GM18951 (cell line): ENCODE measurements at regions of chr20 and their contacts with region 1.

Region 1: DNA sequence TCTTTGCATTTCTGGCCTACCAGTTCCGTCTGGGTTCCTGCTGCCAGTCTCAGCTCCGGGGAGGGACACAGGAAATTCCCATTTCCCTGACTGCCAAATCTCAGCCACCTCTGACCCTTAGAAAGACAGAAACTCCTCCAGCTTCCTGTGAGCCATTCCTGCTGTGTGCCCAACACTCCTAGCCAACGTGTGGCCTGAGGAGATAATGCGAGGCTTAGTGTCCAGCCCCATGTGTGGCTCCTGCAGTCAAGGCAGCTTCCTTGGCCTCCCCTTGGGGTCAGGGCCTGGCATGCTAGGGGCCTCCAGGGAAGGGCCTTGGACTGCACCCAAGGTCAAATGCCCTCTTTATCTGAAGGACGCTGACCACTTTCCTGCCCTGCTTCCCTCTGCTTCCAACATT is 45.1 kb downstream of the MAFB start:
- POLR2A ChIP-seq: no peak

Region 2: DNA sequence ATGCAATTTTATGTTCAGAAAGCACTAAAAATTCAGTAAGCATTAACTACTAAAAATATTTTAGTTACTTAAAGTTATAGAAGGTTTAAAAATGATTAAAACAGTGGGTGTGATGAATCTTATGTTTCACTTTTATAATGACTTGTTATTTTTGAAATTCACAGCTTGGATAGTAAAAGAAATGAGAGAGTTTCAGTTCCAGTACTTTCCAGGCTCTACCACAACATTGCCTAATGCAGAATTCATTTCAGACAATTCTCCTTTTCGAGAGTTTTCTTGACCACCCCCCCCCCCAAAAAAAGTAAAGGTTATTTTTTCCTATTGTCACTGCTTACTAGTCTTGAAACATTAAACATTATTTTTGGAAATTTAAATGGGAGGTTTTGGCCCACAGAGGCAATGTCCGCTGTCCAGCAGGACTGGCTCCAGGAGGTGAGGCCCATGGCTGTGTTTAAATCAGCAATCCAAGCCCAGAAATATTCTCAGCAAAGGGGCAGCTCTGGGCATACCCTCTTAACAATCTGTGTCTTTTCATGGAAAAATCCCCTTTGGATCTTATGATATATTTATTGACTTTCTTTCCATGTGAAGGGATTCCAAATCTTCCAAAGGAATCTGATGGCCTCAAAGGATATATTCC is 474.8 kb before region 1 on chr20:
- in situ Hi-C with region 1: no loop called
- POLR2A ChIP-seq: no peak

Region 3: GRCh38 chr20:40599987-40600386 is 43.9 kb before region 1 on chr20:
- in situ Hi-C with region 1: loop called (anchors 5 kb)
- POLR2A ChIP-seq: no peak